HepG2 (cell line): ENCODE measurements at regions of chr17 and their contacts with region 1.

Region 1: DNA sequence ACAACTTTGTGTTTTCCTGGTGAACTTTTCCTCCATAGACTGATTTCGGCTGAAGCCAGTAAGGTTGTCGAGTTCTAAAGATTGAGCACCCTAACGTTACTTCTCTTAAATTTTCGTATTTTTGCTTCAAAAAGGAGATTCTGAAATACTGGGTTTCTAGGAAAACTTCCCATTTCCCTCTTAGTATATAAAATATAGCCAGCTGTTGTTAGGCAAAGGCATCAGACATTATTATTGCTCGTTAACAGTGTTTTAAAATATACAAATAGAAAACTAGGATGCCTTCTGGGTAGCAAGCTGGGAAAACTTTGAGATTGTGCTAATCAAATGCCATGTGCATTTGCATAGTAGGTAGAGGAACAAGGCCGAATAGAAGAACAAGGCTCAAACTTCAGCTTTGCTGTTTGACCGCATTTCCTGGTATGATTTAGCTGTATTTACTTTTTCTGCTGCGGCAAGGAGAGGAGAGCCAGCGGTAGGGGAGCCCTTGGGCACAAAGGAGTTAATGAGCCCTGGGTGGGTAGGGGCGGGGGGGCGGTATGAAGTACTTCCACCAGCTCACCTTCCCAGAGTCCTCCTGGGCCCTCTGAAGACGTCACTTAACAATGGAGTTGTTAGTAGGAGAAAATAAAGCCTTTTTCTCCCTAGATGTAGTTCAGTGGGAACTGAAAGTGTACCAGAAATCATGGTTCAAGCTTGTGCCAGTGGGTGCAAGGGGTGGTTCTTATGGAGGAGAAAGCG is 151.9 kb downstream of the MSI2 start:
- DNase-seq: peak; percentile 86
- ATAC-seq: peak; percentile 27
- H3K4me3 ChIP-seq: peak overlapping the region; percentile 26 to 57 (median 51)
- H3K27ac ChIP-seq: peak overlapping the region; percentile 96
- H3K4me1 ChIP-seq: peaks cover 100% of the 10 kb centered on the region
- H3K27me3 ChIP-seq: no peaks in the 10 kb centered on the region
- CTCF ChIP-seq: no peak
- EP300 ChIP-seq: peak in 1 of 2 experiments; percentile 41; a peak in 1 of 4 replicates
- POLR2A ChIP-seq: peak in 1 of 2 experiments; percentile 39; a peak in 1 of 4 replicates
- RAD21 ChIP-seq: no peak

Region 2: GRCh38 chr17:56985371-56986162 is 422.7 kb before region 1 on chr17:
- CTCF ChIA-PET with region 1: no interaction called
- POLR2A ChIA-PET with region 1: no interaction called
- in situ Hi-C with region 1: no loop called
- intact Hi-C with region 1: no loop called
- DNase-seq: no peak
- ATAC-seq: no peak; the same call in 1 of the 3 replicates
- H3K4me3 ChIP-seq: no peak overlapping the region
- H3K27ac ChIP-seq: no peak overlapping the region
- H3K4me1 ChIP-seq: peaks cover 13% of the 10 kb centered on the region
- H3K27me3 ChIP-seq: no peaks in the 10 kb centered on the region
- CTCF ChIP-seq: no peak
- EP300 ChIP-seq: no peak
- POLR2A ChIP-seq: no peak
- RAD21 ChIP-seq: no peak

Region 3: DNA sequence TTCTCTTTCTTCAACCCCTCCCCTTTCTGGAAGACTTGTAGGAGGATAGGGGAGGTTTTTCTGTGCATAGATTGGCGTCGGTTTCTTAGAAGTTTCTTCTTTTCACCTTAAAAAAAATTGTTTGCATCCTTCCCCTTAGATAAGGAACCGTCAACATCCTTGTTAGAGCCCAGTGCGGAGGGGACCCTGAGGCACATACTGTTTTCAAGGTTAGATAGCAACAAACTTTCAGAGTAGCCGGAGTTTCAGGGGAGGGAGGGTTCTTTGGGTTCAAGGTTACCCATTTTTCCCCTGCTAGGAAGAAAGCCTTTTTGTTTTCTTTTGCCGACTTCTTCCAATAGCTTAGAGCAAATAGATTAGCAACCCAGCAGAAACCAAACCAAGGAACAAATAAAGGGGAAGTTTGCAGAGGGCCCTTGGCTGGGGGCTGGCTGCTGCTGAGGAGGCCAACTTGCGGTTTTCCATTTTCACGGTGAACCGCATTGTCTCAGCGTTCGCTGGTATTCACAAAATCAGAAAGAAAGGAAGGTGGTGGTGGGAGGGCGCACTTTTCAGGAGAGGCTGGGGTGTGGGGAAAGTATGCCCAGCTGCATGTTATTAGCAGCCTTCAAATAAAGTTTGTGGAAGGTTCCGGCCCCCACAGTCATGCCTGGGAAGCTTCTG is 123.1 kb before region 1 on chr17:
- CTCF ChIA-PET with region 1: no interaction called
- POLR2A ChIA-PET with region 1: no interaction called
- in situ Hi-C with region 1: no loop called
- intact Hi-C with region 1: loop called (anchors 10 kb)
- DNase-seq: peak; percentile 65
- ATAC-seq: peak; percentile 49
- H3K4me3 ChIP-seq: peak overlapping the region in 1 of 3 experiments; percentile 30; a peak in 1 of 6 replicates
- H3K27ac ChIP-seq: peak overlapping the region; percentile 54
- H3K4me1 ChIP-seq: peaks cover 58% of the 10 kb centered on the region
- H3K27me3 ChIP-seq: no peaks in the 10 kb centered on the region
- CTCF ChIP-seq: no peak
- EP300 ChIP-seq: peak in 1 of 2 experiments; percentile 78; a peak in 2 of 4 replicates
- POLR2A ChIP-seq: no peak
- RAD21 ChIP-seq: no peak

Region 4: GRCh38 chr17:57357399-57357807 is 50.8 kb before region 1 on chr17:
- CTCF ChIA-PET with region 1: no interaction called
- POLR2A ChIA-PET with region 1: no interaction called
- in situ Hi-C with region 1: no loop called
- intact Hi-C with region 1: no loop called
- DNase-seq: no peak
- ATAC-seq: no peak; the same call in 2 of the 3 replicates
- H3K4me3 ChIP-seq: no peak overlapping the region
- H3K27ac ChIP-seq: no peak overlapping the region
- H3K4me1 ChIP-seq: peaks cover 52% of the 10 kb centered on the region
- H3K27me3 ChIP-seq: no peaks in the 10 kb centered on the region
- CTCF ChIP-seq: no peak
- EP300 ChIP-seq: no peak
- POLR2A ChIP-seq: no peak
- RAD21 ChIP-seq: no peak

Region 5: DNA sequence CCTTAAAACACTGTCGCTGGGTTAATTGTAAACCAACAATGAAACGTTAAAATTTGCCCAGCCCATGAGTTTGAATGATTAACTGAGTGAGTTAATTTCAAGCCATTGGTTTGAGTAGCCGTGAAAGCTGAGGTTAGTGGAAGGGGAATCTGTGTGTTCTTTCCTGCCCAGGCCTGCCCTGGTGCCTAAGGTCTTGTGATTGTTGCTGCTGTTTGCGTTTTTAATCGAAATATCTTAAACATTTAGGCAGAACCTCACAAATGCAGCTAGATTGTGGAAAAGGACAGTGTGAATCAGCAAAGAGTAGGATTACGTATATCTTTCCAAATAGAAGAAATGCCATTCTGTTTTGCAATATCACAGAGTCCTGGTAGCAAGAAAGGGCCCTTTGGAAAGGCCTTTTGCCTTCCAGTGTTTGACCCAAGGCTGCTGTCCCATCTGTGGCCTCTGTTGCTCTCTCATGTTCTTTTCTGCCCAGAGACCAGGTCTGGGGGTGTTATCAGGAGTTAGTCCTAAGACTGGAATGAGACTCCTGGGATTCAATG is 38.1 kb before region 1 on chr17:
- CTCF ChIA-PET with region 1: no interaction called
- POLR2A ChIA-PET with region 1: interaction called, 20 read pairs
- in situ Hi-C with region 1: no loop called
- intact Hi-C with region 1: loop called (anchors 2 kb)
- DNase-seq: peak; percentile 94
- ATAC-seq: peak; percentile 83
- H3K4me3 ChIP-seq: peak overlapping the region; percentile 2 to 39 (median 28); a peak in 4 of 6 replicates
- H3K27ac ChIP-seq: peak overlapping the region; percentile 85
- H3K4me1 ChIP-seq: peaks cover 95% of the 10 kb centered on the region
- H3K27me3 ChIP-seq: no peaks in the 10 kb centered on the region
- CTCF ChIP-seq: no peak
- EP300 ChIP-seq: peak in 1 of 2 experiments; percentile 86; a peak in 3 of 4 replicates
- POLR2A ChIP-seq: no peak
- RAD21 ChIP-seq: no peak

Region 6: GRCh38 chr17:57429966-57430365 is 21.7 kb after region 1 on chr17:
- CTCF ChIA-PET with region 1: no interaction called
- POLR2A ChIA-PET with region 1: no interaction called
- in situ Hi-C with region 1: no loop called
- intact Hi-C with region 1: no loop called
- DNase-seq: no peak
- ATAC-seq: no peak
- H3K4me3 ChIP-seq: no peak overlapping the region
- H3K27ac ChIP-seq: no peak overlapping the region
- H3K4me1 ChIP-seq: peaks cover 7% of the 10 kb centered on the region
- H3K27me3 ChIP-seq: no peaks in the 10 kb centered on the region
- CTCF ChIP-seq: no peak
- EP300 ChIP-seq: no peak
- POLR2A ChIP-seq: no peak
- RAD21 ChIP-seq: no peak

Region 7: DNA sequence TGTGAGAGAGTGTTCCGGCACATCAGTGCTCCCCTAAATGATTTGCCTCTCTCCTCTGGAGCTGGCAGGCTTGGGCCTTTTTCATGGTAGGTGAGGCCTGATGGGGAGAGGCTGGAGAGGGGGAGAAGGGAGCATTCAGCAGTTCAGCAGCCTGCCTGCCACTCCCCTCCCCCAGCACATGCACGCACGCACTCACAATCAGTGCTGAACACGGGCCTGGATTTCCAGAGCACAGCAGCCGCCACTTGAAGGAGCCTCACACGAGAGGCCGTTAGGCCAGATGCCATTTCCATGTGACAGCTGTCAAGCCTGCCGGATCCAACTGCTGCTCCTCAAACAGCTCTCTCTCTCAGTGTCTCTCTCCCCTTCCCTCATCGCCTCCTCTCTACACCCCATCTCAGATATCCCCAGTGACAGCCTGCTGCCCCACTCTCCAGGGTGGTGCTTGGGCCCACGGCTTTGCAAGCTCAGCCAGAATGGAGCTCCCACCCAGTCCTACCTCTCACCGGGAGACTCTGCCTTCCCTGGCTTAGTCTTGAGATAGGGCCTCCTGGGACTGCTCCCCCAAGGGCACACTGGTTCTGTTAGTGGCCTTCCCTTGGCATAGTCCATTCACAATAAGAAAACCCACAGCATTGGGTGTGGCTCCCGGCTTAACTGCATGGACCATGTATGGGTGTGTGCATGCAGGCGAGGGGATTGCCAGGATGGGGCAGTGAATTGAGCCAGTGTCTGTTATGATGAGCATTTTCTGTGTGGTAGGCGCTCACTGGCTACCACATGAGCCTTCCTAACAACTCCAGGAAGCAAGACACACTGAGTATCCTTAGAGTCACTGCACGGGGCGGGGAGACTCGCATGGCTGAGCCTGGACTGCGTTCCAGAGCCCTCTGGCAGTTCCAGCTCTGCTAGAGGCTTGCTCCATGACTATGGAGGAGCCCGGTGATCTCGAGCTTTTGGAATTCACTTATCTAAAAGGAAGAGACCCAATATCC is 110.6 kb after region 1 on chr17:
- CTCF ChIA-PET with region 1: no interaction called
- POLR2A ChIA-PET with region 1: interaction called, 11 read pairs
- in situ Hi-C with region 1: no loop called
- intact Hi-C with region 1: loop called (anchors 1 kb)
- DNase-seq: no peak
- ATAC-seq: no peak
- H3K4me3 ChIP-seq: no peak overlapping the region
- H3K27ac ChIP-seq: peak overlapping the region; percentile 95
- H3K4me1 ChIP-seq: peaks cover 89% of the 10 kb centered on the region
- H3K27me3 ChIP-seq: no peaks in the 10 kb centered on the region; a peak in 1 of 5 replicates
- CTCF ChIP-seq: no peak
- EP300 ChIP-seq: no peak
- POLR2A ChIP-seq: no peak
- RAD21 ChIP-seq: no peak

Region 8: DNA sequence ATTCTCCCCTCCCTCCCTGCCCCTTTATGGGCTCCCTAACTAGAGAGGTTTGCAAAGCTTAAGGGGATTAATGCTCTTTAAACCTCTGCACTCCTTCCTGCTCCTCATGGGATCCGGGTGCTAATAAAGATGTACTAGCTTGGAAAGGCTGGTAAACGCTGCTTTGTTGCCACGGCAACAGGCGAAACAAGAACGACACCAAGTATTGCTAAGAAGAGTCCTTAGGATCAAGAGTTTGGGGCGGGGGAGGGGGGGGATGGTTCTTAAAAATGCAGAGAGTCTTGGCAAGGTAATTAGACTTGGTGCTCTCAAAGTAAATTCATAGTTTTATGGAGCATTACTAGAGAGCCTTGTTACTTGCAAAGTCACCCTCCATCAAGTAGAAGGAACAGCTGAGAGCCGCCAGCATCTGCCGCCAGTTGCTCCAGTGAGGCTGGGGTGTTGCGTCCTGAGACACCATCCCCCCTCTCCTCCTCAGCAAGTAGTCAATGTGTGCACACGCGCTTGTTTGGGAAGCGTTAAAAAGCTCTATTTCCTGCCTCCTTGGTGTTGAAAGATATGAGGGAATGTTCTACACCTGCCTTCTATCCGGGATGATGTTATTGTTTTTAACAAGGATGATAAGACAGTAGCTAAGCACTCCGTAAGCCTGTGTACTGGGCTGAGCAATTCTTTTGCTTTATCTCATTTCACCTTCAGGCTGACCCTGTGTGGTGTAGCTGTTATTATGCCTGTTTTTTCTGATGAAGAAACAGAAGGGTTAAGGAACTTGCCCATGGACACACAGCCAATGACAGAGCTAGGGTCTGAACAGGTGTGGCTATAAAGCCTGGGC is 146.0 kb after region 1 on chr17:
- CTCF ChIA-PET with region 1: no interaction called
- POLR2A ChIA-PET with region 1: no interaction called
- in situ Hi-C with region 1: no loop called
- intact Hi-C with region 1: no loop called
- DNase-seq: no peak
- ATAC-seq: no peak
- H3K4me3 ChIP-seq: no peak overlapping the region
- H3K27ac ChIP-seq: no peak overlapping the region
- H3K4me1 ChIP-seq: peaks cover 73% of the 10 kb centered on the region
- H3K27me3 ChIP-seq: no peaks in the 10 kb centered on the region
- CTCF ChIP-seq: no peak
- EP300 ChIP-seq: no peak
- POLR2A ChIP-seq: no peak
- RAD21 ChIP-seq: no peak